ENCODE measurements at regions of chr19 and their contacts with region 1.

Region 1: GRCh38 chr19:51441410-51442390 is 16.6 kb downstream of the SIGLEC8 start:
- DNase-seq: peak; percentile 96
- ATAC-seq: peak; percentile 91
- H3K4me3 Mint-ChIP-seq: peak overlapping the region; percentile 72
- H3K27ac Mint-ChIP-seq: peak overlapping the region; percentile 95
- H3K4me1 Mint-ChIP-seq: peaks cover 67% of the 10 kb centered on the region
- H3K27me3 Mint-ChIP-seq: no peaks in the 10 kb centered on the region

Region 2: GRCh38 chr19:50893047-50893737 is 548.5 kb before region 1 on chr19:
- CTCF ChIA-PET with region 1: no interaction called
- POLR2A ChIA-PET with region 1: no interaction called
- intact Hi-C with region 1: no loop called
- DNase-seq: peak; percentile 33
- ATAC-seq: no peak
- H3K4me3 Mint-ChIP-seq: no peak overlapping the region
- H3K27ac Mint-ChIP-seq: no peak overlapping the region
- H3K4me1 Mint-ChIP-seq: peaks cover 3% of the 10 kb centered on the region
- H3K27me3 Mint-ChIP-seq: peaks cover 24% of the 10 kb centered on the region

Region 3: DNA sequence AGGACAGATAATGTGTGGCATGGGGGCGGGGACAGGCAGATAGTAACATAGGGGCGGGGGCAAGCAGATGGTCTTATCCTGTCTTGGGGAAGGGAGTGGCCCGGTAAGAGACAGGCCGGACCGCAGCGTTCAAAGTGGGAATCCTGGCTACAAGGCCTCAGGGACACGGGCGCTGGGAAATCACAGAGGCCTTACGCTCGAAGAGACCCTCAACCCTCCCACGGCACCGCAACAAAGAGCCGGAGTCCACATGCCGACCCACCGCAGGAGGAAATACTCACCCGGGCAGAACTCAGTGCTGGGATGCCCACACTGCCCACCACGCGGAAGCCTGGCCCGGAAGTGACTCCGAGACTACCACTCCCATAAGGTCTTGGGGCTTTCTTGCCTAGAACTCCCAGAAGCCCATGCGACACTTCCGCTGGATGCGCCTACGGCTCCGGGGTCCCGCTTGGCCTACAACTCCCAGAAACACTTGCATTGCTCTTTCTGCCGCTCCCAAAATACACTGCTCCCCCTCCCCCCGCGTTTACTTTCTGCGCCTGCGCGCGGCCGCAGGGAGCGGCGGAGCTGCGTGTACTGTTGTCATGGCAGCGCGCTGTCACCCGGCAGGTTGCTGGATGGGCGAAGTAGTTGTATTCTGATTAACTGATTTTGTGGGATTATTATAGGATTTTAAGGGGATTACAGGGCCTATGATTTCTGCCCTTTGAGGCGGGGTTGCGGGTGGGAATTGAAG is 333.5 kb before region 1 on chr19 and contains the start of gene CTU1:
- CTCF ChIA-PET with region 1: no interaction called
- POLR2A ChIA-PET with region 1: no interaction called
- intact Hi-C with region 1: loop called in 1 of 2 experiments (anchors 1 kb)
- DNase-seq: peak; percentile 99
- ATAC-seq: peak; percentile 98
- H3K4me3 Mint-ChIP-seq: peak within 1 kb of the TSS; percentile 92
- H3K27ac Mint-ChIP-seq: peak within 1 kb of the TSS; percentile 91
- H3K4me1 Mint-ChIP-seq: peaks cover 36% of the 10 kb centered on the region
- H3K27me3 Mint-ChIP-seq: no peaks in the 10 kb centered on the region
- total RNA-seq, gene CTU1: 7.2 to 9.1 TPM

Region 4: GRCh38 chr19:51158474-51159129 is 283.1 kb before region 1 on chr19:
- CTCF ChIA-PET with region 1: no interaction called
- POLR2A ChIA-PET with region 1: no interaction called
- intact Hi-C with region 1: loop called in 1 of 2 experiments (anchors 2 kb)
- DNase-seq: peak; percentile 90
- ATAC-seq: peak; percentile 86
- H3K4me3 Mint-ChIP-seq: no peak overlapping the region
- H3K27ac Mint-ChIP-seq: no peak overlapping the region
- H3K4me1 Mint-ChIP-seq: peaks cover 5% of the 10 kb centered on the region
- H3K27me3 Mint-ChIP-seq: no peaks in the 10 kb centered on the region

Region 5: DNA sequence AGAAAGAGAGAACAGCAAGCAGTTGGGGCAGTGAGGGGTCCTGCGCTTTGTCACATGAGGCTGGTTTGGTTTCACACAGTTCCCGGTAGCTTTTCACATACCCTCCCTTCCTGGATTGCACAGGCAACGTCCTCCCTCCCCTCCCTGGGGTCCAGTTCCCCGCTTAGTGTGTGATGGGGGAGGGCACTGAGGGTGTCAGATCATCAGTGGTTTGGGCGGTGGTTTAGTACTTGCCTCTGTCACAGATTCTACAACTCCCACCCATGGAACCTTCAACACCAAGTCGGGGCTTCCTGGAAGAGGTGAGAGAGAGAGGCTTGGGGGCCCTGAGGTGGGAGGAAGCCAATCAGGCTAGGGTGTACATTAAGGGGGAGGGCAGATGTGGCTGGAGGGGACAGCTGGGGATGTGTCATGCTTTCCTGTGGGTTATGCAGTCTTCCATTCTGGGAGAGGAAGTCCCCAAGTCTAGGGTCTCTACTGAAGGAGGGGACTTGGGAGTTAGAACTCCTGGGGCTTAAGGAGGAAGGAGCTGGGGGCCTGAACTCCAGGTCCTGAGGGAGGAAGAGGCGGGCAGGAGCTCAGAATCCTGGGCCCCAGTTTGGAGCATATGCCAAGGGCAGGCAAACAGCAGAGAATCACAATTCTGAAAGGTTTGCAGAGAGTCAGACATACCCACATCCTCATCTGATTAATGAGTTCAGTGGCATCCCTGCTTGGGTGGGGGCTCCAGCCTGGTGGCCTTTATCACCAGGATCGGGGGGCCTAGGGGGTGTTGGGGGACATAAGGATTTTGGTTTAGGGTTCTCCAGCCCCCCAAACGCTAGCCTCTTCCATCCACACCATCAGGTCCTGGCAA is 68.8 kb before region 1 on chr19 and contains the start of gene NKG7:
- CTCF ChIA-PET with region 1: no interaction called
- POLR2A ChIA-PET with region 1: interaction called, 8 read pairs
- intact Hi-C with region 1: loop called (anchors 1 kb)
- DNase-seq: peak; percentile 89
- ATAC-seq: peak; percentile 83
- H3K4me3 Mint-ChIP-seq: peak within 1 kb of the TSS; percentile 70
- H3K27ac Mint-ChIP-seq: peak within 1 kb of the TSS; percentile 94
- H3K4me1 Mint-ChIP-seq: peaks cover 73% of the 10 kb centered on the region
- H3K27me3 Mint-ChIP-seq: no peaks in the 10 kb centered on the region
- total RNA-seq, gene NKG7: 92.1 to 125 TPM

Region 6: GRCh38 chr19:51473009-51473707 is 31.5 kb after region 1 on chr19:
- CTCF ChIA-PET with region 1: interaction called, 14 read pairs
- POLR2A ChIA-PET with region 1: no interaction called
- intact Hi-C with region 1: no loop called
- DNase-seq: peak; percentile 93
- ATAC-seq: peak; percentile 96
- H3K4me3 Mint-ChIP-seq: no peak overlapping the region
- H3K27ac Mint-ChIP-seq: no peak overlapping the region
- H3K4me1 Mint-ChIP-seq: peaks cover 20% of the 10 kb centered on the region
- H3K27me3 Mint-ChIP-seq: peaks cover 6% of the 10 kb centered on the region

Region 7: GRCh38 chr19:51489113-51489512 is 47.4 kb after region 1 on chr19:
- CTCF ChIA-PET with region 1: no interaction called
- POLR2A ChIA-PET with region 1: interaction called, 6 read pairs
- intact Hi-C with region 1: loop called (anchors 1 to 2 kb)
- DNase-seq: peak; percentile 50
- ATAC-seq: peak; percentile 91
- H3K4me3 Mint-ChIP-seq: no peak overlapping the region
- H3K27ac Mint-ChIP-seq: peak overlapping the region; percentile 77
- H3K4me1 Mint-ChIP-seq: peaks cover 30% of the 10 kb centered on the region
- H3K27me3 Mint-ChIP-seq: peaks cover 24% of the 10 kb centered on the region

Region 8: DNA sequence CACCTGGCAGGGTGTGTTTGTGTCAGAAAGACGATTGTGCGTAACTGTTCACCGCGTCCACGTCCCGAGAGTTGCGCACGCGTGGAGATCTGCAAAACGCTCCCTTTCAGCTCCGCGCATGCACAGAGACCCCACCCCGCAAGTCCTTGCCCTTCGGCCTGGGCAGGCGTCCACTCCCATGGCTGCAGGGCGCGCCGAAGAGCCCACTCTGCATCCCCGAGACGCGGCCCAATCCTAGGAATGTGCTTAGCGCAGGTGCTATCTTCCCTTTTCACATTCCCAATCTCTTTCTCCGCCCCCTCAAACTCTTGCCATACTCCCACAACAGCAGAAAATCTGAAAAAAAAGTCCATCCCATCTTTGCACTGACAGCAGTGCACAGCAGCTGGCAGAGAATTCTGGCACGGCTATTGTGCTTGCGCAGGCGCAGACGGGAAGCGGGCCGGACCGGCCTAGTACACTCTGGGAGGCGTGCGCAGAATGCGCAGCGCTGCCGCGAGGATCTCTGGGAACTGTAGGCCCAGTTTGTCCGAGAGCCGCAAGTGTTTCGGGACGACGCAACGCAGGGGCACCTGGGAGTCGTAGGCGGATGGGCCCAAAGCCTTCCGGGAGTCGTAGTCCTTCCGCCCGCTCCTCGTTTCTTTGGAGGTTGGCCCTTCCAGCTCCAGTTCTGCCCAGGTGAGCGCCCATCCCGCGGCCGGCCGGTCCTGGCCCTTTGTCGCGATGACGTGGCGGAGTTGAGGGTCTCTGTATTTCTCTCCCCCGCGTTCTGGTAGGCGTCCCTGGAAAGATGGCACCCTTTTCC is 152.5 kb after region 1 on chr19:
- CTCF ChIA-PET with region 1: no interaction called
- POLR2A ChIA-PET with region 1: no interaction called
- intact Hi-C with region 1: no loop called
- DNase-seq: peak; percentile 99
- ATAC-seq: peak; percentile 100
- H3K4me3 Mint-ChIP-seq: peak overlapping the region; percentile 84
- H3K27ac Mint-ChIP-seq: peak overlapping the region; percentile 81
- H3K4me1 Mint-ChIP-seq: peaks cover 18% of the 10 kb centered on the region
- H3K27me3 Mint-ChIP-seq: peaks cover 5% of the 10 kb centered on the region

Measured in activated CD4-positive, alpha-beta T cell treated with anti-CD3 and anti-CD28 coated beads for 36 hours (primary cell).